Activated naive CD4-positive, alpha-beta T cell treated with anti-CD3 and anti-CD28 coated beads for 36 hours (primary cell): ENCODE measurements at regions of chr5 and their contacts with region 1.

Region 1: GRCh38 chr5:141524604-141525597 is 36.0 kb downstream of the PCDHGC5 start:
- DNase-seq: peak; percentile 57
- H3K4me3 Mint-ChIP-seq: no peak overlapping the region
- H3K27ac Mint-ChIP-seq: no peak overlapping the region
- H3K4me1 Mint-ChIP-seq: peaks cover 32% of the 10 kb centered on the region
- H3K27me3 Mint-ChIP-seq: no peaks in the 10 kb centered on the region

Region 2: DNA sequence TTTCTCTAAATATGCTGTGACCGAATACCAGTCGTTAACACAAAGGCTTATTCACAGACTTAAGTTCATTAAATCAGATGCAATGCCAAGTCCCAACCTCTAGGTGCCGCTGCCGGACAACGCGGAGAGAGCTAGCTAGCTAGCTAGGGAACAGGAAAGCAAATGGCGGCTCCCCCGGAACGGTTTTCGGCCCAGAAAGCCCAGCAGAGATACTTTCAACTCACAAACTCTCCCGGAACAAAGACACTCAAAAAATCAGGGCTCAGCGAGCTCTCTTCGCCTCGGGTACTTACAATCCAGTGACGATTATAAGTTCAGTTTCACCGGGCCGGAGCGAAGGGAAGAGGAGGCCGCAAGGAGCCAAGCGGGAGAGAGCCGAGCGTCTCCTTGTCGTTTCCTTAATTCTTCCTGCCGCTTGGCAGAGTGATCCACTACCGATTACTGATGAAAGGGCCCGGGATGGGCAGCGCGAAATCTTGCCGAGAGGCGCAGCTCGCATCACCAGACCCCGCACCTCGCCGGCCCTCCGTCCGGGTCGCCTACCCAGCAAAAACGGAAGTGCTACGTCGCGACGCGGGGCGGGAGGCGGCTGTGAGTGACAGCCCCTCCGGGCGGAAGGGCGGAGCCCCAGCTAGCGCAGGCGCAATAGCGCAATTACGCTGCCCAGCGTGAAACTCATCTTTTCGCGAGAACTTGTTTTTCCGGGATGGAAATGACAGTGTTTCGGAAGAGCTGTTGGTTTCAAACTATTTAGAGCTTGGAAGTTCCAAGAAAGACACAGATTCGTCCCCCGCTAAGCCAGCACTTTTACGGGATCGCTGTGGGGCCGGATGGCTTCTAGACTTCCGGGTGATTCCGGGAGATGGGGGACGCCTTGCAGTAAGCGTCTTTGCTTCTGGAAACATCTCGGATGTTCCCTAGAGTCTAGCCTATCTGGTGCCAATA is 204.4 kb before region 1 on chr5 and contains the start of gene TAF7:
- CTCF ChIA-PET with region 1: interaction called, 5 read pairs
- intact Hi-C with region 1: loop called (anchors 1 kb)
- DNase-seq: peak; percentile 95
- H3K4me3 Mint-ChIP-seq: peak within 1 kb of the TSS; percentile 97
- H3K27ac Mint-ChIP-seq: peak within 1 kb of the TSS; percentile 99
- H3K4me1 Mint-ChIP-seq: peaks cover 25% of the 10 kb centered on the region
- H3K27me3 Mint-ChIP-seq: no peaks in the 10 kb centered on the region
- total RNA-seq, gene TAF7: 57.0 to 57.9 TPM

Region 3: DNA sequence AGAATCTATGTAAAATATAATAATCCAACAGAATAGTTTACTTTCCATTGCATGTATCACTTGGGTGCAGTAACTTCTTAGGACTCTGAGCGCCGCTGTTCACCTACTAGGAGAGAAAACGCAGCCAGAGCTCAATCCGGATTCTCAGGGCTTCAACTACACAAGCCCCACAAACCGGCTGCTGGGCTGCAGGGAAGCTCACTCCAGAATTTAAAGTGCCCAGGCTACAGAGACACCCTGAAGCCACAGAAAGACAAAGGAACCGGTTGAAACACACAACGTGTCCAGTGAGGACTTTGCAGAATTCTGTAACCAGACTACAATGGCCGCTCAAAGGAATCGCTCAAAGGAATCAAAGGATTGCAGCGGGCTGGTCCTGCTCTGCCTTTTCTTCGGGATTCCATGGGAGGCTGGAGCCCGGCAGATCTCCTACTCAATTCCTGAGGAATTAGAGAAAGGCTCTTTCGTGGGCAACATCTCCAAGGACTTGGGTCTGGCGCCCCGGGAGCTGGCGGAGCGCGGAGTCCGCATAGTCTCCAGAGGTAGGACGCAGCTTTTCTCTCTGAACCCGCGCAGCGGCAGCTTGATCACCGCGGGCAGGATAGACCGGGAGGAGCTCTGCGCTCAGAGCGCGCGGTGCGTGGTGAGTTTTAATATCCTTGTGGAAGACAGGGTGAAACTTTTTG is 111.9 kb before region 1 on chr5 and contains the start of gene PCDHGA10:
- CTCF ChIA-PET with region 1: interaction called, 13 read pairs
- intact Hi-C with region 1: no loop called
- DNase-seq: peak; percentile 73
- H3K4me3 Mint-ChIP-seq: peak within 1 kb of the TSS; percentile 78
- H3K27ac Mint-ChIP-seq: no peak within 1 kb of the TSS
- H3K4me1 Mint-ChIP-seq: peaks cover 16% of the 10 kb centered on the region
- H3K27me3 Mint-ChIP-seq: peaks cover 69% of the 10 kb centered on the region
- total RNA-seq, gene PCDHGA10: 0.05 TPM in 1 of 2 experiments, not detected in the other

Region 4: DNA sequence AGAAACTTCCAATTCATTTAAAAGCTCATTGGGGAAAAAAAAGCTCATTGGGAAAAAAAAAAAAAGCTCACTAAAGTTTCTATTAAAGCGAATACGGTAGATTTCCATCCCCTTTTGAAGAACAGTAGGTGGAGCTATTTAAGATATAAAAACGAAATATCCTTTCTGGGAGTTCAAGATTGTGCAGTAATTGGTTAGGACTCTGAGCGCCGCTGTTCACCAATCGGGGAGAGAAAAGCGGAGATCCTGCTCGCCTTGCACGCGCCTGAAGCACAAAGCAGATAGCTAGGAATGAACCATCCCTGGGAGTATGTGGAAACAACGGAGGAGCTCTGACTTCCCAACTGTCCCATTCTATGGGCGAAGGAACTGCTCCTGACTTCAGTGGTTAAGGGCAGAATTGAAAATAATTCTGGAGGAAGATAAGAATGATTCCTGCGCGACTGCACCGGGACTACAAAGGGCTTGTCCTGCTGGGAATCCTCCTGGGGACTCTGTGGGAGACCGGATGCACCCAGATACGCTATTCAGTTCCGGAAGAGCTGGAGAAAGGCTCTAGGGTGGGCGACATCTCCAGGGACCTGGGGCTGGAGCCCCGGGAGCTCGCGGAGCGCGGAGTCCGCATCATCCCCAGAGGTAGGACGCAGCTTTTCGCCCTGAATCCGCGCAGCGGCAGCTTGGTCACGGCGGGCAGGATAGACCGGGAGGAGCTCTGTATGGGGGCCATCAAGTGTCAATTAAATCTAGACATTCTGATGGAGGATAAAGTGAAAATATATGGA is 94.4 kb before region 1 on chr5 and contains the start of gene PCDHGA12:
- CTCF ChIA-PET with region 1: interaction called, 14 read pairs
- intact Hi-C with region 1: loop called (anchors 1 kb)
- DNase-seq: peak; percentile 65
- H3K4me3 Mint-ChIP-seq: peak within 1 kb of the TSS; percentile 53
- H3K27ac Mint-ChIP-seq: no peak within 1 kb of the TSS
- H3K4me1 Mint-ChIP-seq: peaks cover 15% of the 10 kb centered on the region
- H3K27me3 Mint-ChIP-seq: peaks cover 54% of the 10 kb centered on the region
- total RNA-seq, gene PCDHGA12: not detected